ENCODE measurements at regions of chr4 and their contacts with region 1.

Region 1: DNA sequence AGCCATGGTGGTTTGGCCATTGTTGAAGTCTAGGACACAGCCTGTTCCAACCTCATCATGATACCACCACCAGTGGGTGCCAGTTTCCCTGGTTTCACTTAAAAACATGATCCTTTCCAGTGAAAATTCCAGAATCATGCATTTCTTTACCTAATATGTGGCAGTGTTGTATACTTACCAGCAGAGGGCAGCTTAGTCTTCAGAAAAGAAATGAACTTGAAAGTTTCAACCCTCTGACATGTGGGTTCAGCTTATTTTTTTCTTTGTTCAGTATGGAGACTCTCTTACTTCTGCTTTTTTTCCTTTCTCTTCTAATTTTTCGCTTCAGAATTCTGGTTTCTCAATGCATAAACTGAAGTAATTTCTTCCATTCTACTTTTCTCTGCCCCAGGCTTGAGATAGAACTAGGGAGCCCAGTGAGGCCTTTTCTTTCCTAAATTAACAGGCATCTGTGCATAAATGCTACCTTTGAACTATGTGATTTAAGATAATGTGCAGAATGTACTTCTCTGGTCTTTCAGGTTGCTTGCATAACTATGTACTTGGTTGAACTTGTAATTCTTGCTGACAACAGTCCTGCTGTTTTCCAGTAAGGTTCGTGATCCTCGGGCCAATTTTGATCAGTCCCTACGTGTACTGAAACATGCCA is 10.7 kb downstream of the LIAS start:
- DNase-seq: peak in 1 of 3 donors; percentile 42
- ATAC-seq: peak; percentile 91
- H3K4me3 ChIP-seq: no peak overlapping the region
- H3K4me1 ChIP-seq: peaks cover 7% of the 10 kb centered on the region
- CTCF ChIP-seq: peak; percentile 46

Region 2: GRCh38 chr4:39657465-39657864 is 187.9 kb after region 1 on chr4:
- intact Hi-C with region 1: loop called in 1 of 2 experiments (anchors 5 kb)
- DNase-seq: no peak
- ATAC-seq: no peak
- H3K4me3 ChIP-seq: no peak overlapping the region
- H3K4me1 ChIP-seq: no peaks in the 10 kb centered on the region
- CTCF ChIP-seq: no peak

Region 3: DNA sequence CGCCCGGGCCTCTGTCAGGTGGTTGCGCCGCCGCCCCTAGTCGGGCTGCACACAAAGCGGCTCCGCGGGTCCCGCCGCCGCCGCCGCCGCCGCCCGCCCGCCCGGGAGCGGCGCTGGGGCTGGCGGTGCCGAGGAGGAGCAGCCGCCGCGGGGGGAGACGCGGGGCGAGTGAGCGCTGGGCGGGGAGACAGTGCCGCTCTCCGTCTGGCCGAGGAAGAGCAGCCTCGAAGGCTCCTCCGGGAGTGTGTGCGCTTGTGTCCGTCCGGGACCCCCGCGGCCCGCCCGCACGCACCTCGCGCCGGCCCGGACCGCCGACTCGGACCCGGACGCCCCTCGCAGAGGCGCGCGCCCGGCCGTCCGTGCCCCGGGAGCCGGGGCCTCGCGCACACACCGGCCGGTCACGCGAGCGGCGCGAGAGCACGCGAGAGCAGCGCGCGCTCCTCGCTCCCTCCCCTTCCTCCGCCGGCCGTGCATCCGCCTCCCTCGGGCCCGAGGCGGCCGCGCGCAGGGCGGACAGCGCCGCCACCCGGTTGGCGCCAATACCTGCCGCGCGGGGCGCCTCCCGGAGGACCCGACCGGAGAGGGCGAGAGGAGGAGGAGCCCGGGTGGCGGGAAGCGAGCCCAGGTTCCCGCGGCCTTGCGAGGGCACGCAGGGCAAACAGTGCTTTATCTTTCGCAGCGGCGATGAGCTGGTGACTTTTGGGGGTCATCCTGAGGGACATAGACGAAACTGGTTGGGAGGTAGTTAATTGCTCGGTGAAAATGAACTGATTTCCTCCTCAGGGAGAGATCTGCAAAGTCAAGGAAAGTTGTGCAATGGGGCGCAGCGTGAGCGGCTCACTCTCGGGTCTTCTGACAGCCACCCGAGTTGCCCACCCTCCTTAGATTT is 508.2 kb after region 1 on chr4 and contains the start of gene PDS5A:
- intact Hi-C with region 1: loop called in 1 of 2 experiments (anchors 5 kb)
- DNase-seq: peak; percentile 86 to 95 (median 93)
- ATAC-seq: peak; percentile 95
- H3K4me3 ChIP-seq: peak within 1 kb of the TSS; percentile 78
- H3K4me1 ChIP-seq: peaks cover 11% of the 10 kb centered on the region
- CTCF ChIP-seq: peak; percentile 94
- total RNA-seq, gene PDS5A: 53.4 to 68.3 (median 64.7) TPM